ENCODE measurements at regions of chr10 and their contacts with region 1.

Region 1: GRCh38 chr10:97553575-97554031 is 19.0 kb upstream of the ANKRD2 start:
- DNase-seq: peak; percentile 82
- H3K4me3 ChIP-seq: no peak overlapping the region
- H3K27ac ChIP-seq: no peak overlapping the region
- H3K4me1 ChIP-seq: peaks cover 3% of the 10 kb centered on the region
- H3K27me3 ChIP-seq: no peaks in the 10 kb centered on the region
- CTCF ChIP-seq: peak; percentile 83 to 96
- POLR2A ChIP-seq: no peak

Region 2: GRCh38 chr10:97463363-97464132 is 90.1 kb before region 1 on chr10:
- CTCF ChIA-PET with region 1: interaction called, 61 read pairs
- POLR2A ChIA-PET with region 1: interaction called, 5 read pairs
- dilution Hi-C with region 1: no loop called
- intact Hi-C with region 1: loop called (anchors 1 kb)
- DNase-seq: peak; percentile 68
- H3K4me3 ChIP-seq: no peak overlapping the region
- H3K27ac ChIP-seq: no peak overlapping the region
- H3K4me1 ChIP-seq: peaks cover 3% of the 10 kb centered on the region
- H3K27me3 ChIP-seq: no peaks in the 10 kb centered on the region
- CTCF ChIP-seq: peak; percentile 75 to 76
- POLR2A ChIP-seq: no peak

Region 3: DNA sequence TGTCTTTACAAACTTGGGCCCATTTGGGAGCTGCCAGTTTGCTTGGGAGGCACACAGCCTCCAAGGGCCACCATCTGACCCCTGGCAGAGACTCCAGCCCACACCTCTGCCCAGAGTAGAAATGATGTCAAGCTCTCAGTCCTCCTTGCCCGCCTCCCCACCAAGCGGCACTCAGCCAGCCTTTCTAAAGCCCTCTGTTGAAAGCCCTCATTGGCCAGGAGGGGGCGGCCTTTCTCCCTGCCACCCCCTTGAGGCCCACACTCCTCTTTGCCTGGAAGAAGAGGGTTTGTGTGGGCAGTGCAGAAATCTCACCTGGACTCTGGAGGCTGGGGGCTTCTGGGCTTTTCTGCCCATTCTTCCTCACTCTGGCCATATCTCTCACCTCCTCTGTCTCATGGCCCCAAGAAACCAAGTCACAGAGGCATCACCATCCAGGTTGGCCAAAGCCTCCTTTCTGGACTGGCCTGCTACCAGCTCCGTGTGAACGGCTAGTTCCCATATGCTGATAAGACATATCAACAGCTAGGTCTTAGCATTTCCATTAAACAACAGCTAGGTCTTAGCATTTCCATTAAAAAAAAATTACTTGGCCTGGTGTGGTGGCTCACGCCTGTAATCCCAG is 18.7 kb before region 1 on chr10:
- CTCF ChIA-PET with region 1: interaction called, 159 read pairs
- POLR2A ChIA-PET with region 1: no interaction called
- dilution Hi-C with region 1: no loop called
- intact Hi-C with region 1: loop called (anchors 1 kb)
- DNase-seq: peak; percentile 55
- H3K4me3 ChIP-seq: no peak overlapping the region
- H3K27ac ChIP-seq: no peak overlapping the region
- H3K4me1 ChIP-seq: peaks cover 9% of the 10 kb centered on the region
- H3K27me3 ChIP-seq: no peaks in the 10 kb centered on the region
- CTCF ChIP-seq: peak; percentile 64 to 82
- POLR2A ChIP-seq: no peak

Region 4: GRCh38 chr10:97596101-97597062 is 42.8 kb after region 1 on chr10:
- CTCF ChIA-PET with region 1: interaction called, 12 read pairs
- POLR2A ChIA-PET with region 1: no interaction called
- dilution Hi-C with region 1: no loop called
- intact Hi-C with region 1: no loop called
- DNase-seq: peak; percentile 98
- H3K4me3 ChIP-seq: no peak overlapping the region
- H3K27ac ChIP-seq: peak overlapping the region; percentile 82
- H3K4me1 ChIP-seq: peaks cover 25% of the 10 kb centered on the region
- H3K27me3 ChIP-seq: no peaks in the 10 kb centered on the region
- CTCF ChIP-seq: no peak
- POLR2A ChIP-seq: peak; percentile 66

Measured in endothelial cell of umbilical vein (primary cell).